ENCODE measurements at regions of chr3 and their contacts with region 1.

Region 1: GRCh38 chr3:136752422-136753325 is 496 bp upstream of the STAG1 start:
- DNase-seq: peak; percentile 97 to 99 (median 99)
- H3K4me3 ChIP-seq: peak overlapping the region; percentile 72 to 94
- H3K4me3 Mint-ChIP-seq: peak overlapping the region; percentile 87 to 97 (median 94)
- H3K27ac ChIP-seq: peak overlapping the region; percentile 80
- H3K27ac Mint-ChIP-seq: peak overlapping the region; percentile 95 to 99 (median 98)
- H3K4me1 ChIP-seq: peaks cover 44% of the 10 kb centered on the region
- H3K4me1 Mint-ChIP-seq: peaks cover 32 to 53% (median 39%) of the 10 kb centered on the region in 4 donors
- H3K27me3 ChIP-seq: no peaks in the 10 kb centered on the region
- H3K27me3 Mint-ChIP-seq: no peaks in the 10 kb centered on the region

Region 2: DNA sequence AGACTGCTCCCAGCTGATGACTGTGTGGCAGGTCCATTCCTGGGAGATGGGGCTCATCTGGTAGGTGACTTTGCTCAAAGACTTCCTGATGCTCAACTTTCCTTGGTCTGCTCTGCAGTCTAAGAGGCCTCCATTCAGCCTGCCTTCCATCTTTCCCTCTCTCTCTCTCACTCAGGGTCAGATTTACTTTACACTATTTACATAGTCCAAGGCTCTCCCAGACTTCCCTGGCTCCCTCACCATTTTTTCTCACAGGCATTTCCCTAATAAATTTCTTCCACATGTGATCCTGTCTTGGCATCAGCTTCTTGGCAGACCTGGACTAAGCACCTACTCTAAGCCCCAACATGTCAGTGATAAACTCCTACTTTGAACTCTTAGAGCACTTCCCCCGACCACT is 515.6 kb before region 1 on chr3:
- CTCF ChIA-PET with region 1: no interaction called
- POLR2A ChIA-PET with region 1: no interaction called
- intact Hi-C with region 1: no loop called
- DNase-seq: no peak
- H3K4me3 ChIP-seq: no peak overlapping the region
- H3K4me3 Mint-ChIP-seq: no peak overlapping the region
- H3K27ac ChIP-seq: no peak overlapping the region
- H3K27ac Mint-ChIP-seq: no peak overlapping the region
- H3K4me1 ChIP-seq: no peaks in the 10 kb centered on the region
- H3K4me1 Mint-ChIP-seq: peaks cover 0 to 1% (median 0%) of the 10 kb centered on the region in 4 donors
- H3K27me3 ChIP-seq: no peaks in the 10 kb centered on the region
- H3K27me3 Mint-ChIP-seq: peaks cover 8 to 9% of the 10 kb centered on the region in 2 donors

Region 3: DNA sequence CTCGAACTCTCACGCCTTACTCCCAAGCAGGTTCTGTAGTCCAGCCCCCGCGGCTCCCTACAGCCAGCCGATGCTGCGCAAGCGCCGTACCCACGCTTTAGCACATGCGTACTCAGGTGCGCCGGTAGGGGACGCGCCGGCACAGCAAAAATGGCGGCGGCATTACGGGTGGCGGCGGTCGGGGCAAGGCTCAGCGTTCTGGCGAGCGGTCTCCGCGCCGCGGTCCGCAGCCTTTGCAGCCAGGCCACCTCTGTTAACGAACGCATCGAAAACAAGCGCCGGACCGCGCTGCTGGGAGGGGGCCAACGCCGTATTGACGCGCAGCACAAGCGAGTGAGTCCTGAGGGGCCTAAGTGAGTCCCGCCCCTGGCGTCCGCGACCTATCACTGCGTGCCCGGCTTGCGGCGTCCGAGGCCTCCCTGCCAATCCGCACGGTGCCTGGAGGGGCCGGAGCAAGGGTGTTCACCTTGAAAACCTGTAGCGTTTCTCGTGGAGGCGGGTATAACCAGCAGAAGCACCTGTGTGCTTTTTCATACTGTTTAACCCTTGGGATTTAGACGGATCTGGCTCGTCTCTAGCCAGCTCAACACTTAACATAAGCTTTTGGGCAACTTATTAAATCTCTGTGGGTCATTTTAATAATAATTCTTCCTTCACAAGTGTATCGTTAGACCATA is 502.3 kb before region 1 on chr3 and contains the start of gene PCCB:
- CTCF ChIA-PET with region 1: interaction called, 19 read pairs
- POLR2A ChIA-PET with region 1: interaction called, 14 read pairs
- intact Hi-C with region 1: loop called (anchors 1 kb)
- DNase-seq: peak; percentile 93 to 96 (median 94)
- H3K4me3 ChIP-seq: peak within 1 kb of the TSS; percentile 43 to 77
- H3K4me3 Mint-ChIP-seq: peak within 1 kb of the TSS; percentile 85 to 93 (median 90)
- H3K27ac ChIP-seq: peak within 1 kb of the TSS; percentile 75
- H3K27ac Mint-ChIP-seq: peak within 1 kb of the TSS; percentile 75 to 94 (median 90)
- H3K4me1 ChIP-seq: peaks cover 17% of the 10 kb centered on the region
- H3K4me1 Mint-ChIP-seq: peaks cover 15 to 27% (median 20%) of the 10 kb centered on the region in 4 donors
- H3K27me3 ChIP-seq: no peaks in the 10 kb centered on the region
- H3K27me3 Mint-ChIP-seq: no peaks in the 10 kb centered on the region
- total RNA-seq, gene PCCB: 12.1 to 12.4 TPM

Region 4: GRCh38 chr3:136390574-136390973 is 362.1 kb before region 1 on chr3:
- CTCF ChIA-PET with region 1: interaction called, 132 read pairs
- POLR2A ChIA-PET with region 1: interaction called, 30 read pairs
- intact Hi-C with region 1: loop called (anchors 1 kb)
- DNase-seq: no peak
- H3K4me3 ChIP-seq: no peak overlapping the region
- H3K4me3 Mint-ChIP-seq: no peak overlapping the region
- H3K27ac ChIP-seq: no peak overlapping the region
- H3K27ac Mint-ChIP-seq: no peak overlapping the region
- H3K4me1 ChIP-seq: no peaks in the 10 kb centered on the region
- H3K4me1 Mint-ChIP-seq: peaks cover 0 to 2% (median 0%) of the 10 kb centered on the region in 4 donors
- H3K27me3 ChIP-seq: no peaks in the 10 kb centered on the region
- H3K27me3 Mint-ChIP-seq: no peaks in the 10 kb centered on the region

Region 5: DNA sequence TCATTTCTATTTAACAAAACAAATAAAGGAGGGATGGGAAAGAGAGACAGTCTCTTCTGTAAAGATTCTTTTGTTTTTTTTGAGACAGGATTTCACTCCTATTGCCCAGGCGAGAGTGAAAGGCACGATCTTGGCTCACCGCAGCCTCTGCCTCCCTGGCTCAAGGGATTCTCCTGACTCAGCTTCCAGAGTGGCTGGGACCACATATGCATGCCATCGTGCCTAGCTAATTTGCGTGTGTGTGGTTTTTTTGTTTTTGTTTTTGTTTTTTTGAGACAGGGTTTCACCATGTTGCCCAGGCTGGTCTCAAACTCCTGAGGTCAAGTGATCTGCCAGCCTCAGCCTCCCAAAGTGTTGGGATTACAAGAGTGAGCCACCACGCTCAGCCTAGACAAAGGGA is 23.8 kb before region 1 on chr3:
- CTCF ChIA-PET with region 1: interaction called, 20 read pairs
- POLR2A ChIA-PET with region 1: interaction called, 11 read pairs
- intact Hi-C with region 1: loop called (anchors 2 kb)
- DNase-seq: no peak
- H3K4me3 ChIP-seq: no peak overlapping the region
- H3K4me3 Mint-ChIP-seq: peak overlapping the region in 7 of 8 donors; percentile 4 to 71 (median 40)
- H3K27ac ChIP-seq: no peak overlapping the region
- H3K27ac Mint-ChIP-seq: peak overlapping the region in 6 of 7 donors; percentile 1 to 67 (median 45)
- H3K4me1 ChIP-seq: peaks cover 81% of the 10 kb centered on the region
- H3K4me1 Mint-ChIP-seq: peaks cover 43 to 73% (median 61%) of the 10 kb centered on the region in 4 donors
- H3K27me3 ChIP-seq: no peaks in the 10 kb centered on the region
- H3K27me3 Mint-ChIP-seq: no peaks in the 10 kb centered on the region

Region 6: DNA sequence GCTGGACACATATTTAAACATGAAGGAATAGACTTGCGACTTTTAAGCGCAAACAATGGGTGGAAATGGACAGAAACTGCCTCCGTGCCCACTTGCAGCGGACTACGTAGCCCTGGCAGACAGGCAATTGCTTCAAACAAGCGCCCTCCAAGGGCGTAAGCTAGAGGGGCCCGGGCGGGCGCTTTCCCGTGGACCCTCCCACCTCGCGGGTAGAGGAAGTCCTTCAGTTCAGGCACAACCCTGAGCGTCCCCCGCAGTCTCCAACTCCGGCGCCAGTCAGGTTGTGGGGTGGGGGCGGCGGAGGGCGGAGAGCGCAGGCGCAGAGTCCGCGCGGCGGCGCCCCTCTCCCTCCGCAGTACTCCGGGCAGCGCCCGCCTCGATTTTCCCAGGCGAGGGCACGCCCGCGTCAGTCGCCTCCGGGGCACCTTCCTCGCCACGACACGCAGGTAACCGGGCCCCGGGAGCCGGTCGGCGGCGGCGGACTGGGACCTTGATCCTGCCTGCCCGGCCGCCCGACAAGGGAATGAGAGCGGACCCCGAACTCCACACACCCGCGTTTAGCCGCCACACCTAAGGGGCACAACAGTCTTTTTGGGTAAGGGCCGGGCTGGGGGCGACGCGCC is 66.2 kb after region 1 on chr3 and contains the start of gene SLC35G2:
- CTCF ChIA-PET with region 1: interaction called, 5 read pairs
- POLR2A ChIA-PET with region 1: interaction called, 3 read pairs
- intact Hi-C with region 1: loop called (anchors 2 kb)
- DNase-seq: peak; percentile 4 to 44 (median 18)
- H3K4me3 ChIP-seq: peak within 1 kb of the TSS; percentile 50 to 63
- H3K4me3 Mint-ChIP-seq: peak within 1 kb of the TSS; percentile 83 to 94 (median 89)
- H3K27ac ChIP-seq: no peak within 1 kb of the TSS
- H3K27ac Mint-ChIP-seq: peak within 1 kb of the TSS in 4 of 7 donors; percentile 11 to 65 (median 42)
- H3K4me1 ChIP-seq: peaks cover 17% of the 10 kb centered on the region
- H3K4me1 Mint-ChIP-seq: peaks cover 14 to 21% (median 18%) of the 10 kb centered on the region in 4 donors
- H3K27me3 ChIP-seq: peaks cover 13% of the 10 kb centered on the region
- H3K27me3 Mint-ChIP-seq: peaks cover 18 to 39% of the 10 kb centered on the region in 2 donors
- total RNA-seq, gene SLC35G2: 0.17 to 0.42 TPM

Region 7: DNA sequence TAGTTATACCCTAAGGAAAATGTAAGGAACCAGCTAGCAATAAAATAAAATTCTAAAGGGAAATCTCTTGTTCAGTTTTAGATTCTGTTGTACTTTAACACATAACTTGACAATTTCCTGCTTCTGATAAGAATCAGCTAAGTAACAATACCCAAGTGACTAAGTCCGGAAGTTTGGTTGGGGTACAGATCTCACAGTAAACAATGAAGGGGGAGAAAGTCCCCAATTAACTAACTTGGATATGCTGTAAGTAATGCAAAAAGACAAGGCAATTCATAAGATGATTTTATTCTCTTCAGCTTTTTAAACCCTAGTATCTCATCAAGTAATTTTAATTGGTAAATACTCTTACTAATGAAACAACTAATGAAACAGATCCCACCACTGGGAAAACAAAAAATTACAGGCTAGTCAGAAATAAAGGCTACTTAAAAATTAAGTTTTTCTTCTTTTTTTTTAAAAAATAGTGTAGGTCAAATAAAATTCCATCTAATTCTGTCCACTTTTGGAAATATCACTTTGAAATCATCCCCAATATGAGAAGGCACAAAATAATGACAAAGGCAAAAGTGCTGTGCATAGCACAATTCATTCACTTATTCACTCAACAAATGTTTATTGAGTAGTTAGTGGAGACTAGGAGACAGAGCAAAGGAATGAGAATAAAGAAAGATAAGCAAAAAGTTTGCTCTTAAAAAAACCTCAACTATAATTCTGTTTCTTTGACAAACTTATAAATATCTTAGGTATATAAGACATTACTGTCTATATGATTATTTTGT is 167.3 kb after region 1 on chr3:
- CTCF ChIA-PET with region 1: interaction called, 19 read pairs
- POLR2A ChIA-PET with region 1: interaction called, 14 read pairs
- intact Hi-C with region 1: loop called (anchors 5 kb)
- DNase-seq: peak; percentile 64 to 78 (median 69)
- H3K4me3 ChIP-seq: no peak overlapping the region
- H3K4me3 Mint-ChIP-seq: peak overlapping the region; percentile 25 to 91 (median 74)
- H3K27ac ChIP-seq: peak overlapping the region; percentile 55
- H3K27ac Mint-ChIP-seq: peak overlapping the region; percentile 81 to 95 (median 86)
- H3K4me1 ChIP-seq: peaks cover 93% of the 10 kb centered on the region
- H3K4me1 Mint-ChIP-seq: peaks cover 64 to 90% (median 77%) of the 10 kb centered on the region in 4 donors
- H3K27me3 ChIP-seq: no peaks in the 10 kb centered on the region
- H3K27me3 Mint-ChIP-seq: no peaks in the 10 kb centered on the region